CD8-positive, alpha-beta T cell (primary cell): ENCODE measurements at regions of chr4 and their contacts with region 1.

Region 1: GRCh38 chr4:40149960-40150385 is 46.9 kb upstream of the RHOH start:
- DNase-seq: peak; percentile 46 to 88 (median 75)
- ATAC-seq: peak; percentile 94
- H3K4me3 ChIP-seq: no peak overlapping the region
- H3K4me3 Mint-ChIP-seq: no peak overlapping the region
- H3K27ac ChIP-seq: no peak overlapping the region
- H3K27ac Mint-ChIP-seq: peak overlapping the region; percentile 81
- H3K4me1 ChIP-seq: peaks cover 36% of the 10 kb centered on the region
- H3K4me1 Mint-ChIP-seq: peaks cover 35% of the 10 kb centered on the region
- H3K27me3 ChIP-seq: no peaks in the 10 kb centered on the region
- H3K27me3 Mint-ChIP-seq: no peaks in the 10 kb centered on the region
- CTCF ChIP-seq: peak; percentile 88

Region 2: DNA sequence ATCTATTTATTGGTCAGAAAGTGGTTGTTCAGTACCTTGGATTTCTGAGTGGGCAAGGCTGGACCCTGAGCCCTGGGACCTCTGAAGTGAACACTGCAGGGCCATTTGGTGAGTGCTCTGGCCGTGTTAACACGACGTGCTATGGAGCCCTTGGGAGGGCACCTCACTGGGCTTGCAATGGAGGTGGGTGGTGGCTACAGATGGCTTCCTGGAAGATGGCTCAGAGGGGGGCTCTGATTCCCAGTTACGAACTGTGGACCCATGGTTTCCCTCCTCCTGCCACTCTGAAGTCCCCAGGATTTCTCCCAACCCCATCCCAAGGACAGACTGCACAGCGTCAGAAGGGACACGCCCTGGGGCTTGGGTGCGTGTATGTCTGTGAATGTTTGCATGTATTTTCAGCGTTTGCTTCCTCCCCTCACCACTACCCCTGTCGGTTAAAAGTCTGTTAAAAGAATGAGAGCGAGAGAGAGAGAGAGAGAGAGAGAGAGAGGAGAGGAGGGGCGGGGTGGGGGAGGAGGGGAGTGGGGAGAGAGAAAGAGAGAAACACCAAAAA is 43.1 kb after region 1 on chr4:
- CTCF ChIA-PET with region 1: interaction called, 14 read pairs
- POLR2A ChIA-PET with region 1: interaction called, 8 read pairs
- intact Hi-C with region 1: loop called (anchors 2 kb)
- DNase-seq: peak in 6 of 9 experiments; percentile 49 to 82 (median 65)
- ATAC-seq: peak; percentile 14
- H3K4me3 ChIP-seq: peak overlapping the region; percentile 36 to 42
- H3K4me3 Mint-ChIP-seq: peak overlapping the region; percentile 100
- H3K27ac ChIP-seq: peak overlapping the region; percentile 60 to 96
- H3K27ac Mint-ChIP-seq: peak overlapping the region; percentile 100
- H3K4me1 ChIP-seq: peaks cover 52% of the 10 kb centered on the region
- H3K4me1 Mint-ChIP-seq: peaks cover 64% of the 10 kb centered on the region
- H3K27me3 ChIP-seq: no peaks in the 10 kb centered on the region
- H3K27me3 Mint-ChIP-seq: no peaks in the 10 kb centered on the region
- CTCF ChIP-seq: no peak

Region 3: GRCh38 chr4:40205259-40206198 is 55.6 kb after region 1 on chr4:
- CTCF ChIA-PET with region 1: interaction called, 12 read pairs
- POLR2A ChIA-PET with region 1: interaction called, 11 read pairs
- intact Hi-C with region 1: loop called in 1 of 2 experiments (anchors 2 kb)
- DNase-seq: peak in 2 of 9 experiments; percentile 56 to 71
- ATAC-seq: peak; percentile 32
- H3K4me3 ChIP-seq: peak overlapping the region; percentile 30 to 83
- H3K4me3 Mint-ChIP-seq: peak overlapping the region; percentile 97
- H3K27ac ChIP-seq: peak overlapping the region; percentile 22 to 96
- H3K27ac Mint-ChIP-seq: peak overlapping the region; percentile 92
- H3K4me1 ChIP-seq: peaks cover 47% of the 10 kb centered on the region
- H3K4me1 Mint-ChIP-seq: peaks cover 70% of the 10 kb centered on the region
- H3K27me3 ChIP-seq: no peaks in the 10 kb centered on the region
- H3K27me3 Mint-ChIP-seq: no peaks in the 10 kb centered on the region
- CTCF ChIP-seq: no peak

Region 4: DNA sequence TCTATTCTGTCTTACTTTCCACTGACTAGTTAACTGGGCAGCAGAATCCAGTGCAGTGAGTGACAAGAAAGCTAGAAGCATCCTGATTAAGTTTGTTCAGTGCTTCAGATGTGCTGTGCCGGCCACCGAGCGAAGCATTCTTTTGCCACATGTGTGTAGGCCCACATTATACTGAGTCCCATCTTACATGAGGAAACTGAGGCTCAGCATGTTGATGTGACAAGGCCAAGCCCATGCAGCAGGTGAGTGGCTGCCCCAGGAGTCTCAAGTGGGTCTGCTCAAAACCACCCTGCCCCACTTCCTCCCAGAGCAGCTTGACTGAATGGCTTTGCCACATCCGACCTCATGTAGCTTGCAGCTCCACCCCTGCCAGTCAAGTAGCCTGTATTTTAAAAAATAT is 97.4 kb after region 1 on chr4:
- CTCF ChIA-PET with region 1: interaction called, 6 read pairs
- POLR2A ChIA-PET with region 1: no interaction called
- intact Hi-C with region 1: loop called (anchors 1 to 5 kb)
- DNase-seq: peak; percentile 39 to 88 (median 72)
- ATAC-seq: peak; percentile 71
- H3K4me3 ChIP-seq: no peak overlapping the region
- H3K4me3 Mint-ChIP-seq: peak overlapping the region; percentile 36
- H3K27ac ChIP-seq: peak overlapping the region; percentile 52 to 98
- H3K27ac Mint-ChIP-seq: peak overlapping the region; percentile 90
- H3K4me1 ChIP-seq: peaks cover 76% of the 10 kb centered on the region
- H3K4me1 Mint-ChIP-seq: peaks cover 82% of the 10 kb centered on the region
- H3K27me3 ChIP-seq: no peaks in the 10 kb centered on the region
- H3K27me3 Mint-ChIP-seq: no peaks in the 10 kb centered on the region
- CTCF ChIP-seq: no peak

Region 5: DNA sequence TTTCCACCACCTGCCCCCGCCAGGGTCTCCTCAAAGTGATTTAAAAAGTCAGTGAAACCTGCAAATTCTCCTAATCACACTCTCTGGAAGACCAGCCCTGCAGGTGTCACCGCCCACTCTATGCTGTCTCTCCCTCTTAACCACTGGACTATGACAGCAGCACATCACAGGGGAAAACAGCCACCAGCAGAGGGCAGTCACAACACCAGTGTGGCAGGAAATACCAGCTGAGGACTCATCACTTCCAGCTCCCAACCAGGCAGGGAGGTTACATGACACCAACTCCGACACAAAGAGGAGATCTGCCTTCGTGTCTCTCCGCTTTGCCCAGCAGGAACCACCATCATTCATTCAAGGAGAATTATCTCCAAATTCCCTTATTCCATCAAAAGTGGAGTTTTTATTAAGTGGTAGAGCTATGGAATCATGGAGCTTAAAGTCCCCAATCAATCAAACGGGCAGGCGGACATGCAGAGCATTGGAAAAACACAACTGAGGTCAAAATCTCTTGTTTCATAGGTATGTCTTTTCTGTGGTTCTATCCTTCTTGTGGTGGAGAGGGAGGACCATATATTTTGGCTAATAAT is 691.1 kb after region 1 on chr4:
- CTCF ChIA-PET with region 1: no interaction called
- POLR2A ChIA-PET with region 1: no interaction called
- intact Hi-C with region 1: loop called in 1 of 2 experiments (anchors 5 kb)
- DNase-seq: peak; percentile 19 to 70 (median 50)
- ATAC-seq: peak; percentile 36
- H3K4me3 ChIP-seq: no peak overlapping the region
- H3K4me3 Mint-ChIP-seq: no peak overlapping the region
- H3K27ac ChIP-seq: no peak overlapping the region
- H3K27ac Mint-ChIP-seq: no peak overlapping the region
- H3K4me1 ChIP-seq: no peaks in the 10 kb centered on the region
- H3K4me1 Mint-ChIP-seq: peaks cover 3% of the 10 kb centered on the region
- H3K27me3 ChIP-seq: no peaks in the 10 kb centered on the region
- H3K27me3 Mint-ChIP-seq: peaks cover 14% of the 10 kb centered on the region
- CTCF ChIP-seq: peak; percentile 51